Dorsolateral prefrontal cortex (tissue), 120 donors: ENCODE measurements at regions of chr14 and their contacts with region 1.

Region 1: GRCh38 chr14:36021030-36021422 is 155.5 kb downstream of the PTCSC3 start:
- DNase-seq: no peak
- H3K4me3 ChIP-seq: peak overlapping the region in 38 of 59 donors; percentile 0 to 59 (median 23)
- H3K27ac ChIP-seq: peak overlapping the region; percentile 1 to 93 (median 84)
- H3K27me3 ChIP-seq: no peaks in the 10 kb centered on the region
- CTCF ChIP-seq: peak in 1 of 56 donors; percentile 4

Region 2: GRCh38 chr14:35985495-35986218 is 35.4 kb before region 1 on chr14:
- intact Hi-C with region 1: loop called in 1 of 2 experiments (anchors 5 kb)
- DNase-seq: no peak
- H3K4me3 ChIP-seq: peak overlapping the region in 5 of 59 donors; percentile 8 to 31 (median 14)
- H3K27ac ChIP-seq: peak overlapping the region; percentile 76 to 100 (median 98)
- H3K27me3 ChIP-seq: no peaks in the 10 kb centered on the region
- CTCF ChIP-seq: peak in 19 of 56 donors; percentile 5 to 48 (median 25)

Region 3: GRCh38 chr14:36048667-36049066 is 27.6 kb after region 1 on chr14:
- intact Hi-C with region 1: no loop called
- DNase-seq: no peak
- H3K4me3 ChIP-seq: no peak overlapping the region
- H3K27ac ChIP-seq: no peak overlapping the region
- H3K27me3 ChIP-seq: peaks cover 0 to 6% (median 0%) of the 10 kb centered on the region in 45 donors
- CTCF ChIP-seq: no peak